IMR-90 (cell line): ENCODE measurements at regions of chr4 and their contacts with region 1.

Region 1: GRCh38 chr4:140756319-140757231 is at the start of gene TBC1D9:
- DNase-seq: peak; percentile 55
- ATAC-seq: peak; percentile 80
- H3K4me3 ChIP-seq: peak within 1 kb of the TSS; percentile 89
- H3K27ac ChIP-seq: peak within 1 kb of the TSS; percentile 75
- H3K4me1 ChIP-seq: no peaks in the 10 kb centered on the region
- H3K27me3 ChIP-seq: no peaks in the 10 kb centered on the region
- CTCF ChIP-seq: no peak
- POLR2A ChIP-seq: no peak
- RAD21 ChIP-seq: no peak
- total RNA-seq, gene TBC1D9: 15.2 and 16.9 TPM in 2 replicates

Region 2: DNA sequence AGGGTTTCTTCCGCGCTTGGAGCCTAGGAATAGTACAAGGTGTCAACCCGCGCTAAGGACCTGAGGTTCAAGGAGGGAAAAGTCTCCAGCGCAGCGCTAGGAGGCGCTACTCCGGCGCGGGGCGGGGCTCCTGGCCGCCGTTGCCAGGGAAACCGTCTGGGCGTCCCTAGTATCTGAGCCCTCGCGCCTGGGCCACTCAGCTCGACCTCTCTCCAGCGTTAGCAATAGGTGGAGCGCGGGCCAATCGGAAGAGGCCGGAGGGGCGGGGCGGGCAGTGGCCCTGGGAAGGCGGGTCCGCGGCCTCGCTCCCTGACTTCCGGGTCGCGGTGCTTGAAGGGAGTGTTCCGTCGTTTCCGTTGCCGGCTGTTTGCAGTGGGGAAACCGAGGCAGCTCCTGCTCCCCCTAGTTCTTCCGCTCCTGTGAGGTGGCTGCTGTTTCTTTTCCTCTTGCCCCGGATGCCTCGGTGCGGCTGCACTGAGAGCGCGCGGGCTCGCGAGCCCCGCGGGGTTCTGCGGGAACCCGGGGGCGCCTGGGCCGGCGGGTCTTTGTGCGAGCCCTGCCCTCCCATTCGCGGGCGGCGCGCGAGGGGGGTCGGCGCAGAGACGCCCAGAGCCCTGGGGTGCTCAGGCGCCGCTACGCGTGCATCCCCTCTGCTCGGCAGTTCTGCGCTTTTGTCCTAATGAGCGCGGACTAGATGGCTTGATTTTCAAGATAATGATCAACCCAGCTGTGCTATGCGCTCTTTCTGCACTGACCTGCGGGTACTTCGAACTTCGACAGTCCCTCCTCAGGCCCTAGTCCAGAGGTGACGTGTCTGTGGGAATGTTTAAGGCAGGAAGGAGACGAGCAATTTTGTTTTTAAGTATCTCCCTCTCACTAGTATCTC is 232.5 kb before region 1 on chr4 and contains the start of gene ELMOD2:
- CTCF ChIA-PET with region 1: no interaction called
- POLR2A ChIA-PET with region 1: no interaction called
- dilution Hi-C with region 1: no loop called
- in situ Hi-C with region 1: no loop called
- intact Hi-C with region 1: loop called (anchors 5 kb)
- DNase-seq: peak; percentile 95
- ATAC-seq: peak; percentile 100
- H3K4me3 ChIP-seq: peak within 1 kb of the TSS; percentile 85
- H3K27ac ChIP-seq: peak within 1 kb of the TSS; percentile 76
- H3K4me1 ChIP-seq: no peaks in the 10 kb centered on the region
- H3K27me3 ChIP-seq: no peaks in the 10 kb centered on the region
- CTCF ChIP-seq: peak; percentile 93
- POLR2A ChIP-seq: peak; percentile 73
- RAD21 ChIP-seq: peak; percentile 41
- total RNA-seq, gene ELMOD2: 10.6 and 30.0 TPM in 2 replicates

Region 3: GRCh38 chr4:140609548-140610425 is 146.8 kb before region 1 on chr4:
- CTCF ChIA-PET with region 1: no interaction called
- POLR2A ChIA-PET with region 1: no interaction called
- dilution Hi-C with region 1: no loop called
- in situ Hi-C with region 1: no loop called
- intact Hi-C with region 1: loop called (anchors 1 kb)
- DNase-seq: peak; percentile 55
- ATAC-seq: peak; percentile 92
- H3K4me3 ChIP-seq: no peak overlapping the region
- H3K27ac ChIP-seq: no peak overlapping the region
- H3K4me1 ChIP-seq: no peaks in the 10 kb centered on the region
- H3K27me3 ChIP-seq: peaks cover 7% of the 10 kb centered on the region
- CTCF ChIP-seq: peak; percentile 67
- POLR2A ChIP-seq: no peak
- RAD21 ChIP-seq: peak; percentile 71

Region 4: DNA sequence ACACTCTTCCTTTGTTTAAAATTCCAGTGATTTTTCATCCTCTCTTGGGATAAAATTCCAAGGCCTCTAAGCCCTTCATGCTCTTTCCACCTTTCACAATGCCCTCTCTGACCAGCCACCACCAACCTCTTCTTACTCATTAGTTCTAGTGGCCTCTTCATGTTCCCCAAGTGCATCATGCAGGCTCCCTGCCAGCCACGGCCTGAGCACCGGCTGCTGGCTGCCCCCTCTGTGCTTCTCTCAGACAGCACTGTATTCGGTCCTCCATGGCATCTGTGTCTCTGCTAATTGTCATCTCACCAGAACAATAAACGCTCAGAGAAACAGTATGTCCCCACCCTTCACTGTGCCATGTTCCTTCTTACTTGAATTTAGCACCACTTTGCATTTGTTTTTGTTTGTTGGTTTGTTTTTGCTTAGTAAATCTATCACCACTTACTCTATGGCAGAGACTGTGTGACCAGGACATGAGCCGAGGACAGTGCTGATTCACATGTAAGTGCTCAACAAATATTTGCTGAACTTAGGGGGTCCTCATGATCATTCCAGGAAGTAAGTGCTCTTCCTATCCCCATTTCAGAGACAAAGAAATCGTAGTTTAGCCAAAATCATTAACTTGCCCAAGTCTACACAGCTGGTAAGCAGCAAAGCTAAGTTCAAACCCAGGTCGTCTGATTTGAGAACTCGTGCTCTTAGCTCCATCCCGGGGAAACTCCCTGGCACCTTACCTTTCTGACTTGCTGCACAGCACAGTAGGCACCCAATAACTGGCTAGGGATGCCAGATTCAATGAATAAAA is 110.8 kb before region 1 on chr4:
- CTCF ChIA-PET with region 1: no interaction called
- POLR2A ChIA-PET with region 1: no interaction called
- dilution Hi-C with region 1: no loop called
- in situ Hi-C with region 1: no loop called
- intact Hi-C with region 1: loop called (anchors 5 kb)
- DNase-seq: peak; percentile 18
- ATAC-seq: peak; percentile 52
- H3K4me3 ChIP-seq: no peak overlapping the region
- H3K27ac ChIP-seq: no peak overlapping the region
- H3K4me1 ChIP-seq: peaks cover 9% of the 10 kb centered on the region
- H3K27me3 ChIP-seq: no peaks in the 10 kb centered on the region
- CTCF ChIP-seq: no peak
- POLR2A ChIP-seq: no peak
- RAD21 ChIP-seq: no peak

Region 5: DNA sequence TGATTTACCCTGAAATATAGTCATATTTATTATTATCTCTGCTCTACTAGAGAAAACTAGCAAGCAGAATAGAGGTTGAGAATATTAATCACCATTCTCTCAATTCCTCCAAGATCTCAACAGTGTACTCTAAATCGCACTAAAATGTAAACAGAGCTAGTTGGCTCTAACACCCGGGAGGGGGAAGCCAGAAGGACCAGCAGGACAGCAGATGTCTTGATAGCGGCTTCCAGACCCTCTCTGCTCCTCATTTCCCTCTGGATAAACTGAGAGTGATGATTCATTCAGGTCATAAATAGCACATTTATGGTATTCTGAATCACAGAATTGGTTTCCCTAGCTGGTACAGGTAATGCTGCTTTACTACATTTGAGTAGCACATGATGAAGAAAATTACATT is 82.8 kb before region 1 on chr4:
- CTCF ChIA-PET with region 1: no interaction called
- POLR2A ChIA-PET with region 1: no interaction called
- dilution Hi-C with region 1: no loop called
- in situ Hi-C with region 1: no loop called
- intact Hi-C with region 1: loop called (anchors 5 kb)
- DNase-seq: peak; percentile 87
- ATAC-seq: peak; percentile 86
- H3K4me3 ChIP-seq: no peak overlapping the region
- H3K27ac ChIP-seq: peak overlapping the region; percentile 40; the same call in 1 of the 2 replicates
- H3K4me1 ChIP-seq: peaks cover 7% of the 10 kb centered on the region
- H3K27me3 ChIP-seq: no peaks in the 10 kb centered on the region
- CTCF ChIP-seq: no peak
- POLR2A ChIP-seq: no peak
- RAD21 ChIP-seq: no peak

Region 6: GRCh38 chr4:140691357-140691756 is 65.2 kb before region 1 on chr4:
- CTCF ChIA-PET with region 1: no interaction called
- POLR2A ChIA-PET with region 1: no interaction called
- dilution Hi-C with region 1: no loop called
- in situ Hi-C with region 1: no loop called
- intact Hi-C with region 1: loop called (anchors 5 kb)
- DNase-seq: peak; percentile 62
- ATAC-seq: peak; percentile 39; the same call in 1 of the 2 replicates
- H3K4me3 ChIP-seq: no peak overlapping the region
- H3K27ac ChIP-seq: no peak overlapping the region
- H3K4me1 ChIP-seq: peaks cover 9% of the 10 kb centered on the region
- H3K27me3 ChIP-seq: no peaks in the 10 kb centered on the region
- CTCF ChIP-seq: no peak
- POLR2A ChIP-seq: no peak
- RAD21 ChIP-seq: no peak

Region 7: DNA sequence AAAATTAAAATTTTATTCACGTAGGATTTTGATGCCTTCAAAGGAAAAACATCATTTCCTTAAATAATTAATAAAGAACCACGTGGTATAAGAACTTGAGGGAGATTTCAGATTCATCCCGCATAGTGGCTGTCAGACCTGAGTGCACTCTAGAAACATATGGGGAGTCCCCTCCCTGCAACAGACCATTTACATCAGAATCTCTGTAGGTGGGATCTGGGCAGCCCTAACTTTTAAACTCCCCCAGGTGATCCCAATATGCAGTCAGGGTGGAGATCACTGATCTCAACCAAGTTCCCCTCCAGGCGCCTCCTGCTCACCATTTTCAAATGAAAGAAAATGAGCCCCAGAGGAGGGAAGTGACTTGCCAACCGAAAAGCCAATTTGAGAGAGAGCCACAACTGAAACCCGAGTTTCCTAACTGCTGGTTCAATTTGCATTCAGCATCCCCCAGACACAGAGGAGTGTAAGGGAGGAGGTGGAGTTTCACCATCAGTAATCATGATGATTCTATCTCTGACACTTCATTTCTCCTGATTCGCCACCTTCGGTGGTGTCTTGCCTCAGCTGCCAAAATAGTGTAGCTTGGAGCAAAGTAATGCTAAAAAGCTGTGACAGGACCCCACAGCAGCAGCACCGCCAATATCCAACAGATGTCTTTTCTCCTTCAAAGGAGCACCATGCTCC is 365.3 kb after region 1 on chr4:
- CTCF ChIA-PET with region 1: no interaction called
- POLR2A ChIA-PET with region 1: no interaction called
- dilution Hi-C with region 1: no loop called
- in situ Hi-C with region 1: no loop called
- intact Hi-C with region 1: no loop called
- DNase-seq: no peak
- ATAC-seq: no peak
- H3K4me3 ChIP-seq: no peak overlapping the region
- H3K27ac ChIP-seq: no peak overlapping the region
- H3K4me1 ChIP-seq: peaks cover 3% of the 10 kb centered on the region; the same call in 1 of the 2 replicates
- H3K27me3 ChIP-seq: no peaks in the 10 kb centered on the region
- CTCF ChIP-seq: no peak
- POLR2A ChIP-seq: no peak
- RAD21 ChIP-seq: no peak